ENCODE measurements at regions of chr15 and their contacts with region 1.

Region 1: GRCh38 chr15:68875377-68876116 is 54.8 kb upstream of the SPESP1 start:
- DNase-seq: peak; percentile 87 to 96 (median 89)
- ATAC-seq: peak; percentile 80 to 96 (median 93)
- H3K4me3 ChIP-seq: peak overlapping the region in 10 of 12 donors; percentile 32 to 53 (median 44)
- H3K27ac ChIP-seq: no peak overlapping the region
- H3K4me1 ChIP-seq: peaks cover 0 to 8% (median 0%) of the 10 kb centered on the region in 12 donors
- H3K27me3 ChIP-seq: peaks cover 0 to 4% (median 0%) of the 10 kb centered on the region in 9 donors
- CTCF ChIP-seq: peak; percentile 77 to 91 (median 86)
- POLR2A ChIP-seq: no peak

Region 2: DNA sequence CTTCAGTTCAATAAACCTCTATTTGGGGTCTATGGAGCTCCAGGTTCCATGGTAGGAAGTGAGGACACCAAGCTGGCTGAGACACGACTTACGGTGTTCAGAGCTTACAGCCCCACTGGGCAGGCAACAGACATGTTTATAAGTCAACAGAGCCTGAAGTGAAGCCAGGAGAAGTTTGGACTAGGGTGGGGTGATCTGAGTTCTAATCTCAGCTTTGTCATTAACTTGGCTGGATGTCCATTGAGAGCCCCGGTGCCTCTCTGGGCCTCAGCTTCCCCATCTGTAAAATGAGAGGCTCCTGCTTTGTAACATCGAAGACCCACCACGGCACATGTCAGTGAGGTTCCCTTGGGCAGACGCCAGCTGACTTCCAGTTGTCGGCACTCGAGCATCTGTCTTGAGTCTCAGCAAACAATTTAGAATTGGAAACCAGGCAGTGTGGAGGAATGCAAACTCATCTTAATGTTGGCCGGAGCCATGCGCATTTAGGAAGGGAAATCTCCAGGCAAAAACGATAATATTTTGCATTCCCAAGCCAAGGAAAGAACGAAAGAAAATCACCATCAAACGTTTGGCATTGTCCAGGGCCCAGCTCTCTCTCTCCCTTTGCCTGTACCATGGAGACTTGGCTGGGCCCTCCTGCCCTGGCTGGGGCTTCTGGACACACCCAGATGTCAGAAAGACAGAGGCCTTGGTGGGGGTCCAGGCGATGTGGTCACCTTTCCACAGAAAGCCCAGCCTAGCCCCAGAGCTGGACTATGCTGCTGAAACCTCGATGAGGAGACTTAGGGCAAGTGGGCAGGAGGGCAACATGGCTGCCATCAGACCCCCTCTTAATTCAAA is 462.0 kb before region 1 on chr15:
- intact Hi-C with region 1: no loop called
- DNase-seq: peak in 2 of 5 donors; percentile 24 to 56
- ATAC-seq: no peak
- H3K4me3 ChIP-seq: no peak overlapping the region
- H3K27ac ChIP-seq: peak overlapping the region in 5 of 12 donors; percentile 24 to 55 (median 34)
- H3K4me1 ChIP-seq: peaks cover 0 to 24% (median 5%) of the 10 kb centered on the region in 12 donors
- H3K27me3 ChIP-seq: no peaks in the 10 kb centered on the region
- CTCF ChIP-seq: no peak
- POLR2A ChIP-seq: no peak

Region 3: GRCh38 chr15:68559345-68560310 is 315.9 kb before region 1 on chr15:
- intact Hi-C with region 1: loop called in 8 of 10 experiments (anchors 1 to 2 kb)
- DNase-seq: peak; percentile 78 to 92 (median 81)
- ATAC-seq: peak; percentile 81 to 95 (median 94)
- H3K4me3 ChIP-seq: peak overlapping the region in 11 of 12 donors; percentile 26 to 66 (median 52)
- H3K27ac ChIP-seq: peak overlapping the region in 2 of 12 donors; percentile 15 to 17
- H3K4me1 ChIP-seq: peaks cover 0 to 19% (median 9%) of the 10 kb centered on the region in 12 donors
- H3K27me3 ChIP-seq: peaks cover 0 to 10% (median 0%) of the 10 kb centered on the region in 9 donors
- CTCF ChIP-seq: peak; percentile 93 to 99 (median 97)
- POLR2A ChIP-seq: no peak

Region 4: DNA sequence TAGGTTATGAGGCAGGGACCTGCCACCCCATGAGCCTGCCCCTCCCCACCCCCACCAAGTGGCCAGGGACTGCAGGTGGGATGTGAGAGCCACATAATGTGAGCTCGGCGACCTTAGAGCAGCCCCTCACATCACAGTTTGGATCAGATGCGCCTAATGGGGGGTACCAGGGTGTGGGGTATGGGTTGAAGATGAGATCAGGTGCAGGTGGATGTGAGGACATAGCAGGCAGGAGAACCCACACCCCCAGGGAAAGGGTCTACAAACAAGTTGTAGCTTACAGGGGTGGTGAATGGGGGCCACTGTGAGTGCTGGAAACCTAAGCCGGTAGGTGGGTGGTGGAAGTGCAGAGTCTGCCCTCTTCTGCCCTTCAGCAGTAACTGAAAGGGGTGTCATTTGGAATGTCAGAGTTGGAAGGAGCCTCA is 202.8 kb before region 1 on chr15:
- intact Hi-C with region 1: loop called in 9 of 10 experiments (anchors 1 to 10 kb)
- DNase-seq: no peak
- ATAC-seq: no peak
- H3K4me3 ChIP-seq: no peak overlapping the region
- H3K27ac ChIP-seq: no peak overlapping the region
- H3K4me1 ChIP-seq: peaks cover 0 to 34% (median 10%) of the 10 kb centered on the region in 12 donors
- H3K27me3 ChIP-seq: no peaks in the 10 kb centered on the region
- CTCF ChIP-seq: peak in 3 of 12 donors; percentile 19 to 32 (median 20)
- POLR2A ChIP-seq: no peak

Region 5: GRCh38 chr15:68783226-68784058 is 92.1 kb before region 1 on chr15:
- intact Hi-C with region 1: loop called in 8 of 10 experiments (anchors 2 to 10 kb)
- DNase-seq: peak in 2 of 5 donors; percentile 45 to 68
- ATAC-seq: peak in 3 of 4 donors; percentile 38 to 58 (median 41)
- H3K4me3 ChIP-seq: no peak overlapping the region
- H3K27ac ChIP-seq: peak overlapping the region in 4 of 12 donors; percentile 28 to 87 (median 68)
- H3K4me1 ChIP-seq: peaks cover 0 to 49% (median 23%) of the 10 kb centered on the region in 12 donors
- H3K27me3 ChIP-seq: no peaks in the 10 kb centered on the region
- CTCF ChIP-seq: peak; percentile 50 to 69 (median 62)
- POLR2A ChIP-seq: no peak

Region 6: DNA sequence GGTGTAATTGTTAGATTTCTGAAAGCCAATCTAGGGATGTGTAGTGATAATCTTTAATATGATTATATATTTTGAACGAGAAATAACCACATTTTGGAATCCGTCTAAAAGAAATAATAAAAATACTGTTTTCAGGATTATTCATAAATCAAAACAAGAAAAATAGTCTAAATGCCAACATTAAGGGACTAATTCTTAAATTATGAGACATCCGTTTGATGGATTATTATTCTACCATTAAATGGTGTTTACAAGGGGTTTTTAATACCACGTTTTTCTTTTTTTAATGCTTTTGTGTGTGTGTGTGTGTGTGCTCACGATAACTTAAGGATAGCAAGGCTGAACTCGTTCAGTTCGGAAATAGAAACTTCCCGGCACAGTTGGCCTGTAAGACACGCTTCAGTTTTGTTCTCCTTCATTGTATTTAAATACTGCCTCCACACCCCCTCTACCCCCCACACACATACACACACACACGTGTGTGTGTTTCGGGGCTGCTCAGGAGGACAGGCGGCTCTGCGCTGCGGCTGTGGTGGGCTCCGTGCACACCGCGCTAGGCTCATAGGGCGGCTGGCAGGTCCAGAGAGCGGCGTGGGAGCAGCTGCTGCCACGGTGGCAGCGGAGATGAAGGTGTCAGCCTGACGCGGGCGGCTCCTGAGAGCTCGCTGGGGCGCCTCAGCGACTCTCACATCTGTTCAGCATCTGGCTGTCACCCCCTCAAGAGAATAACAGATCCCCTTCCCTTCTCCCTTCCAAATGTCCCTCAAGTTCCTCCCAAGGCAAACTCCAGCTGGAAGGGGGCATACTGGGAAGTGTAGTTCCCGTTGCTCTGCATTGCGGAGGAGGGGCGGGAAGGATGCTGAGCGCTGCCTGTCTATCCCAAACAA is 31.9 kb before region 1 on chr15:
- intact Hi-C with region 1: loop called in 1 of 10 experiments (anchors 5 kb)
- DNase-seq: peak in 2 of 5 donors; percentile 11 to 62
- ATAC-seq: peak in 3 of 4 donors; percentile 61 to 73 (median 71)
- H3K4me3 ChIP-seq: peak overlapping the region; percentile 24 to 63 (median 49)
- H3K27ac ChIP-seq: no peak overlapping the region
- H3K4me1 ChIP-seq: peaks cover 0 to 11% (median 2%) of the 10 kb centered on the region in 12 donors
- H3K27me3 ChIP-seq: peaks cover 0 to 67% (median 24%) of the 10 kb centered on the region in 9 donors
- CTCF ChIP-seq: no peak
- POLR2A ChIP-seq: no peak

Region 7: GRCh38 chr15:68924866-68925560 is 49.5 kb after region 1 on chr15:
- intact Hi-C with region 1: no loop called
- DNase-seq: peak; percentile 58 to 81 (median 71)
- ATAC-seq: peak in 3 of 4 donors; percentile 86 to 91 (median 88)
- H3K4me3 ChIP-seq: no peak overlapping the region
- H3K27ac ChIP-seq: no peak overlapping the region
- H3K4me1 ChIP-seq: peaks cover 0 to under 1% (median 0%) of the 10 kb centered on the region in 12 donors
- H3K27me3 ChIP-seq: peaks cover 0 to 5% (median 0%) of the 10 kb centered on the region in 9 donors
- CTCF ChIP-seq: peak; percentile 62 to 92 (median 76)
- POLR2A ChIP-seq: no peak

Region 8: DNA sequence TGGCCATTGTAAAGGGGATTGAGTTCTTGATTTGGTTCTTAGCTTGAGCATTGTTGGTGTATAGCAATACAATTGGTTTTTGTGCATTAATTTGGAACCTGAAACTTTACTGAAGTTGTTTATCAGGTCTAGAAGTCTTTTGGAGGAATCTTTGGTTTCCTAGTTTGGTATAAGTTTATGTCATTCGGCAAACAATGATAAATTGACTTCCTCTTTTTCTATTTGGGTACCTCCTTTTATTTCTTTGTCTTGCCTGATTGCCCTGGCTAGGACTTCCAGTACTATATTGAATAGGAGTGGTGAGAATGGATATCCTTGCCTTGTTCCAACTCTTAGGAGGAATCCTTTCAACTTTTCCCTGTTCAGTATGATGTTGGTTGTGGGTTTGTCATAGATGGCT is 86.9 kb after region 1 on chr15:
- intact Hi-C with region 1: no loop called
- DNase-seq: no peak
- ATAC-seq: no peak
- H3K4me3 ChIP-seq: no peak overlapping the region
- H3K27ac ChIP-seq: no peak overlapping the region
- H3K4me1 ChIP-seq: peaks cover 0 to 4% (median 0%) of the 10 kb centered on the region in 12 donors
- H3K27me3 ChIP-seq: peaks cover 0 to 4% (median 0%) of the 10 kb centered on the region in 9 donors
- CTCF ChIP-seq: no peak
- POLR2A ChIP-seq: no peak

Measured in heart left ventricle (tissue), 16 donors.